Naive thymus-derived CD8-positive, alpha-beta T cell (primary cell): ENCODE measurements at regions of chr16 and their contacts with region 1.

Region 1: DNA sequence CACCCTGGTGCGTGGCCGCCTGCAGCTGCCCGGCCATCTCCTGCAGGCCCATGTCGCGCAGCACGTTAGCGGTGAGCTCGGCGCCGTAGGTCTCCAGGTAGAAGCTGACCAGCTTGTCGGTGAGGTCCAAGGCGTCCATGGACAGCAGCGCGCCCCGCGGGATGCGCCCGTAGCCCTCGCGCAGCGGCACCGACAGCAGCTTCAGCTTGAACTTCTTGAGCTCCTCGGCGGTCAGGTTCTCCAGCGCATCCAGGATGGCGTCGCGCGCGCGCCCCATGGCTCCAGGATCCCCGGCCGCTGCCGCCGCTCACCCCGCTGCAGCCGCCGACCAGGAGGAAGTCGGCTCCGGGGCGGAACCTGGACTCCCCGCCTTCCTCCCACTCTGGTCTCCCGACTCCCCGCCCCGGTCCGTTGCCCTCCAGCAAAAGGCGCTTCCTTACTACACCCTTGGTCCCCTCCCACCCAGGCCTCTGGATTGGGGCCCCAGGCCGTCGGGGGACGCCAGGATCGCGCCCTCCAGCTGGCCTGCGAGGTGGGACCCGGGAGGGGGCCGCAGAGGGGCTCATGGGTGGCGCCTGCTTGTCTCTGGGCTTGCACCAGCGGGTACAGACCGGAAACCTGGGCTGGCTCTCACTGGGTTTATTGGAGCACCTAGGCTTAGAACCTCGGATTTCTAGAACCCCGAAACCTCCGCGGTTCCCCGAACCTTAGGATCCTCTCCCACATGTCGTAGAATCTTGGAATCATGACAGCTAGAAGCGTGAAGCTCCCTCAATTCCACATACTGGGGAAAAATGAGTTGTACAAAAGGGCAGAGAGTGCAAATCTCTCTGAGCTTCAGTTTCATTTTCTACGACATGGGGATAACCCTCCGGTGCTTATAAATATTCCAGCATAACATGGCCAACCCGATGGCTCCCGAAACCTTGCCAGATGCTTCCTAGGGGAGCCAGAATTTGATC is at the start of gene PYCARD:
- DNase-seq: peak in 4 of 10 donors; percentile 18 to 55 (median 40)
- ATAC-seq: peak; percentile 41 to 45
- H3K4me3 Mint-ChIP-seq: peak within 1 kb of the TSS; percentile 85 to 93 (median 89)
- H3K27ac Mint-ChIP-seq: peak within 1 kb of the TSS; percentile 80 to 91 (median 88)
- H3K4me1 Mint-ChIP-seq: peaks cover 30 to 56% (median 54%) of the 10 kb centered on the region in 4 donors
- H3K27me3 Mint-ChIP-seq: no peaks in the 10 kb centered on the region
- polyA plus RNA-seq, gene PYCARD: 39.3 to 65.2 (median 39.7) TPM

Region 2: DNA sequence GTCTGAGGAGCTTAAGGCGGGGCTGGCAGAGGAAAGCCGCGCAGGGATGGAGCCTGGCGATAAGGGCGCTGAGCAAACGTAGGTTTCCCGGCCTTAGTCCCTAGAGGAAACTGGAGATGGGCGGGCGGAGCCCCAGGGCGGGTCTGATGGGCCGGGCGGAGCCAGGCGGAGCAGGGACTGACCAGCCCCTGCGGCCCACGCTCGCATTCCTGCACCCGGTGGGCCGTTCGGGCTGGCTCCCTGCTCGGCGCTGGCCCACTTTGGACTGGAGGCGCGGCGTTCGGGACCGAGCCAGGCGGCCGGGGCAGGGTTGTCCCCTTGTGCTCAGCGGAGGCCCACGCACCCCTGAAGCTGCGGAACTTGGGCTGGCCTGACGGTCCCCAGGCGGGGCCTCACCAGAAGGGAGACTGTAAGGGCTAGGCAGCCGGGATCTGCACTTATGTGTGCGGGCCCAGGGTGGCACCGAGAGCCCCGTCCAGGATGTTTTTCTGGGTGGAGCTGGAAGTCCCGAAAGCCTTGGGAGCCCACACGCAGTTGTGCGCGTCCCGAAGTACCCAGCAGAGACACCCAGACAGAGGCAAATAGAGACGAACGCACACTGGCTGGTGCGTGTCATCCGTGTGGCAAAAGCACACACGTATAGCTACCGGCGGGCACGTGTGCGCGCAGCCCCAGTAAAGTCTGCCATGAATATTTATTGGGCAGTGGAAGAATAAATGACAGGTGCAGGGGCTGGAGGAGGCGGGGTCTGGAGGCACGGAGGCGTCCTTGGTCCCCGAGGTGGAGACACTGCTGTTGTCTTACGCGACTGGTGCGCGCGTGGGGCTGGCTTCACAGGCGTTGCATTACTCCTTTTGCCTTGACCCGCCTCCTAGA is 12.8 kb after region 1 on chr16:
- POLR2A ChIA-PET with region 1: interaction called, 34 read pairs
- DNase-seq: peak in 2 of 10 donors; percentile 15 to 23
- ATAC-seq: peak; percentile 51 to 73
- H3K4me3 Mint-ChIP-seq: peak overlapping the region; percentile 67 to 91 (median 81)
- H3K27ac Mint-ChIP-seq: peak overlapping the region in 4 of 10 donors; percentile 4 to 38 (median 28)
- H3K4me1 Mint-ChIP-seq: peaks cover 8 to 26% (median 23%) of the 10 kb centered on the region in 4 donors
- H3K27me3 Mint-ChIP-seq: peaks cover 6 to 47% (median 23%) of the 10 kb centered on the region in 5 donors